Activated B cell treated with CpG ODN at 0.5 μM for 24 hours (primary cell): ENCODE measurements at regions of chr1 and their contacts with region 1.

Region 1: DNA sequence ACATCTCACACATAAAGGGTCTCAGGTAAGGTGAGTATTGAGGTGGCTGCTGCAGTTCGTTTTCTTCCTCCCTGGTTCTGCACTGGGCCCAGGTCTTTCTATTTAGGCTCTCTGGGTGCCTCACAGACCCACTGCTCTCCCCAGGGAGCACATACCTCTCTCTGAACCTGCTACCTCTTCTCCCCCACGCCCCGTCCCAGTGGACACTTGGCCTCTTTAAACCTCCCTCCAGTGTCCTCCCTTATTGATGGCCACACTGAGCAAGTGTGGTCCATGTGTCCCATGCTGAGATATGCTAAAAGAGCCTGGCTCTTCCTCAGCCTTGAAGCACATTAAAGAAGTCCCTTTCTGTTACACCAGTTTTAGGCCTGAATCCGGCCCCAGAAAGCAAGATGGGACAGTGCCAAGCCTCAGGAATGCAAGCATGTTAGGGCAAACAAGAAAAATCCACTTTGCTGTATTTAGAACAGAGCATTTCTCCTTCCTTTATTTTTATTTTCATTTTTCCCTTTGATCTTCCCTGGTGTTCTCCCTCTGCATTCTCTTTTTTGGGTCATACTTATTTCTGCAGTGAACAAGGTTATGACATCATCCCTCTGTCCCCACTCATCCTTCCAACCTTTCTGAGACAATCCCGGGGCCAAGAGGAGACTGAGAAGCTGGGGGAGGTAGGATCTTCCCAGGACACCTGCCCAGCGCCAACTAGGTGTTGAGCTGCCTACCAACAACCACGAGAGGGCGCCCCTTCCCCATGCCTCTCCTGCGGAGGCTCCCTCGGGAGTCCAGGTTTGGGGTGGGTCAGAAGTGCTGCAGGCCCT is 5.0 kb upstream of the CHI3L2 start:
- DNase-seq: peak; percentile 75
- ATAC-seq: peak; percentile 49
- H3K4me3 Mint-ChIP-seq: peak overlapping the region; percentile 50
- H3K27ac Mint-ChIP-seq: peak overlapping the region; percentile 95
- H3K4me1 Mint-ChIP-seq: peaks cover 87% of the 10 kb centered on the region
- H3K27me3 Mint-ChIP-seq: no peaks in the 10 kb centered on the region
- CTCF ChIP-seq: peak; percentile 80

Region 2: DNA sequence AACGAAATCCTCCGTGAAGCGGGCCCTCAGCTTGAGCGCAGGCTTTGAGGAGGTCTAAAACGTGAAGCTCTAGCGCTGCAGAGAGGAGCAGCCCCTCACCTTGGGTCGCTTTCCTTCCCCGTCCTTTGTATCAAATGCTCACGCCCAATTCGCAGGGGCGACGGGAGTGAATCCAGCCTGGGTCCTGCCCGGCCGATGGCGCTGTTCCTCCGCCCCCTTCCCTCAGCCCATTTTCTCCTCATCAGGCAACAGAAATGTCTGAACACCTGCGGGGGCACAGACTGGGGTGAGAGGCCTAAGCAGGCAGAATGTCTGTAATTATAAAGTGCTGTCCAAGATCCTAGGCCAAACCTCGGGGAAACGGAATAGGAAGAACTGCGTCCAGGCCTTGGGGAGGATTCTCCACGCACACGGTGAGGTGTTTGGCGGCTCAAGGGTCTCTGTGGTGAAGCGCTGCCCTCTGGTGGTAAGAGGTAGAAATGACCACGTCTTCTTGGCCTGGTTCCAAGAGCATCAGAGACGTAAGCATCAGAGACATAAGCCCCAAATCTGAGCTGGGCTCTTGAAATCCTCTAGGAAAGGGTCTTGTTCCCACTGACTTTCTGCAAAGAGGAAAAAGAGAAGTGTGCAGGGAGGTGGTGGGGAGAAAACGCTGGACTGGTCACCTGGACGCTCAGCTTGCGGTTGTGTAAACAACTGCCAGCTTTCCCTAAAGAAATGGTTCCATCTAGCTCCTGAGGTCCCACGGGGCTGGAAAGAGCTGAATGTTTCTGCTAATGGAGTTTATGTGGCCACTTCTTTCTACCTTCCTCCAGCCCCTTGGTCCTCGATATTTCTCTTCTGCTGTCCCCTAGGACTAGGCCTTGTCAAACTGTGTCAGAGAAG is 441.7 kb before region 1 on chr1:
- CTCF ChIA-PET with region 1: no interaction called
- POLR2A ChIA-PET with region 1: no interaction called
- intact Hi-C with region 1: loop called (anchors 5 kb)
- DNase-seq: peak; percentile 48
- ATAC-seq: peak; percentile 85
- H3K4me3 Mint-ChIP-seq: peak overlapping the region; percentile 47
- H3K27ac Mint-ChIP-seq: no peak overlapping the region
- H3K4me1 Mint-ChIP-seq: peaks cover 43% of the 10 kb centered on the region
- H3K27me3 Mint-ChIP-seq: no peaks in the 10 kb centered on the region
- CTCF ChIP-seq: no peak

Region 3: GRCh38 chr1:111116496-111116895 is 106.0 kb before region 1 on chr1:
- CTCF ChIA-PET with region 1: no interaction called
- POLR2A ChIA-PET with region 1: interaction called, 11 read pairs
- intact Hi-C with region 1: no loop called
- DNase-seq: no peak
- ATAC-seq: no peak
- H3K4me3 Mint-ChIP-seq: no peak overlapping the region
- H3K27ac Mint-ChIP-seq: peak overlapping the region; percentile 20
- H3K4me1 Mint-ChIP-seq: peaks cover 22% of the 10 kb centered on the region
- H3K27me3 Mint-ChIP-seq: no peaks in the 10 kb centered on the region
- CTCF ChIP-seq: no peak

Region 4: GRCh38 chr1:111197598-111198284 is 24.8 kb before region 1 on chr1:
- CTCF ChIA-PET with region 1: interaction called, 29 read pairs
- POLR2A ChIA-PET with region 1: interaction called, 258 read pairs
- intact Hi-C with region 1: no loop called
- DNase-seq: no peak
- ATAC-seq: peak; percentile 45
- H3K4me3 Mint-ChIP-seq: no peak overlapping the region
- H3K27ac Mint-ChIP-seq: peak overlapping the region; percentile 68
- H3K4me1 Mint-ChIP-seq: peaks cover 97% of the 10 kb centered on the region
- H3K27me3 Mint-ChIP-seq: no peaks in the 10 kb centered on the region
- CTCF ChIP-seq: no peak

Region 5: GRCh38 chr1:111346089-111346885 is 123.8 kb after region 1 on chr1:
- CTCF ChIA-PET with region 1: interaction called, 3 read pairs
- POLR2A ChIA-PET with region 1: no interaction called
- intact Hi-C with region 1: loop called (anchors 2 kb)
- DNase-seq: peak; percentile 82
- ATAC-seq: peak; percentile 88
- H3K4me3 Mint-ChIP-seq: peak overlapping the region; percentile 93
- H3K27ac Mint-ChIP-seq: peak overlapping the region; percentile 85
- H3K4me1 Mint-ChIP-seq: peaks cover 13% of the 10 kb centered on the region
- H3K27me3 Mint-ChIP-seq: no peaks in the 10 kb centered on the region
- CTCF ChIP-seq: no peak

Region 6: DNA sequence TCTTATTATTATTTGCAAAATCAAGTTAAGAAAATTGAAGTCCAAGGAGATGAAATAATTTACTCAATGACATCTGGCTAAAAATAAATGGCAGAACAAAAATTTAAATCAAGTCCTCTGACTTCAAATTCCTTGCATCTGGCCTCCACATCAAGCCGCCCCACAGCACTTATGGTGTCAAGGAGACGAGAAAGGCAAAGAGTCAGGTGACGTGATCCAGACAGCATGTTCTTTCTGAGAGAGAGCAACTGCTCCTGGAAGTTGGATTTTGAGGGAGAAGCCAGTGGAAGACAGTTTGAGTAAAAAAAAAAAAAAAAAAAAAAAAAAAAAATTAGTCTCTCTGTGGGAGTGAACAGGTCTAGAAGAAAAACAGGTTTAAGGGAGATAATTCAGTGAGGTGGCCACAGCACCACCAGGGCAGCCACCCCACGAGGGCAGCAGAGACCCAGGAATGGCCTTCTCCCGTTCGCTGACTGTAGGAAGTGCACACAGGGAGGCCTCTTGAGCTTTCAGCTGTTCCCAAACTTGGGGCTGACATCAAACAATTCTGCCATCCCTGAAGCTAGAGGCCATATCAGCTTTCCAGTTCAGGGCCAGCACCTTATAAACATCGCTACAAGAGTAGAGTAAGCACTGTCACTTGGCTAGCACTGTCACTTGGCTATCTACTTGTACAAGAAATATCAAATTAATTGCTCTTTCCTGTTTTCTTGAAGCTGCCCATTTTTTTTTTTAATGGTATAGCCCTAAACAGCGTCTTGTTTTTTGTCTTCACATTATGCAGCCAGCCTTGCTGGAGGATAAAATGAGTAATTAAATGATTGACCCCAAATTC is 259.1 kb after region 1 on chr1:
- CTCF ChIA-PET with region 1: interaction called, 3 read pairs
- POLR2A ChIA-PET with region 1: interaction called, 13 read pairs
- intact Hi-C with region 1: no loop called
- DNase-seq: no peak
- ATAC-seq: peak; percentile 73
- H3K4me3 Mint-ChIP-seq: no peak overlapping the region
- H3K27ac Mint-ChIP-seq: no peak overlapping the region
- H3K4me1 Mint-ChIP-seq: peaks cover 42% of the 10 kb centered on the region
- H3K27me3 Mint-ChIP-seq: no peaks in the 10 kb centered on the region
- CTCF ChIP-seq: no peak

Region 7: DNA sequence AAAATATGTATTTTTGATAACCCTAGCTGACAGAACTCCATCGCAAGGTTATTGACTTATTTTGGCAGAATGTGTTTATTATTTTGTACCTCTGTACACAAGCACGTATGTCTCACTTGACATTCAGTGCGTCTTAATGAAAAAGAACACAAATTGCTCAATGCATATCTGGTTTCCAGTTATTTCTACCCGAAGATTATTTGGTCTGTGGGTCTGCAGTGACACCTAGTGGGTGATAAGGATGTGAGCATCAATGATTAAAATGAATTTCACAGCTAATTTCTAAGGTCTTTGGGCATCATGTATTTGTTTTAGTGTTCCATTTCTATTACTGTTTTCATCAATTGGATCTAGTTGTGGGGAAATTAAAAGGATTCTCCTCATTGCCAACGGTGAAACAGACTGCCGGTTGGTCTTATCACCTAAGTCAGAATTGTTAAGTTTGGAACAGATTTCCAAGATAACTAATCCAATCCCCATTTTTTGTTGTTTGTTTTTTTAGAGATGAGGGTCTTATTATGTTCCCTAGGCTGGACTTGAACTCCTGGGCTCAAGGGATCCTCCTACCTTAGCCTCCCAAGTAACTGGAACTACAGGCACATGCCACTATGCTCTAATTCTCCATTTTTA is 547.1 kb after region 1 on chr1:
- CTCF ChIA-PET with region 1: interaction called, 5 read pairs
- POLR2A ChIA-PET with region 1: no interaction called
- intact Hi-C with region 1: loop called (anchors 2 kb)
- DNase-seq: no peak
- ATAC-seq: peak; percentile 58
- H3K4me3 Mint-ChIP-seq: no peak overlapping the region
- H3K27ac Mint-ChIP-seq: no peak overlapping the region
- H3K4me1 Mint-ChIP-seq: no peaks in the 10 kb centered on the region
- H3K27me3 Mint-ChIP-seq: no peaks in the 10 kb centered on the region
- CTCF ChIP-seq: no peak